ENCODE measurements at regions of chr1 and their contacts with region 1.

Region 1: GRCh38 chr1:227482023-227482299 is 81.4 kb upstream of the ZNF678 start:
- DNase-seq: no peak
- H3K4me3 Mint-ChIP-seq: no peak overlapping the region
- H3K27ac Mint-ChIP-seq: no peak overlapping the region
- H3K4me1 Mint-ChIP-seq: no peaks in the 10 kb centered on the region
- H3K27me3 Mint-ChIP-seq: peaks cover 9% of the 10 kb centered on the region

Region 2: GRCh38 chr1:227459326-227459841 is 22.6 kb before region 1 on chr1:
- CTCF ChIA-PET with region 1: no interaction called
- POLR2A ChIA-PET with region 1: no interaction called
- intact Hi-C with region 1: no loop called
- DNase-seq: no peak
- H3K4me3 Mint-ChIP-seq: no peak overlapping the region
- H3K27ac Mint-ChIP-seq: no peak overlapping the region
- H3K4me1 Mint-ChIP-seq: no peaks in the 10 kb centered on the region
- H3K27me3 Mint-ChIP-seq: peaks cover 8% of the 10 kb centered on the region

Region 3: GRCh38 chr1:227954163-227954850 is 472.3 kb after region 1 on chr1:
- CTCF ChIA-PET with region 1: interaction called, 16 read pairs
- POLR2A ChIA-PET with region 1: no interaction called
- intact Hi-C with region 1: loop called (anchors 2 kb)
- DNase-seq: no peak
- H3K4me3 Mint-ChIP-seq: no peak overlapping the region
- H3K27ac Mint-ChIP-seq: no peak overlapping the region
- H3K4me1 Mint-ChIP-seq: peaks cover 5% of the 10 kb centered on the region
- H3K27me3 Mint-ChIP-seq: peaks cover 22% of the 10 kb centered on the region

Region 4: GRCh38 chr1:228082135-228082891 is 600.4 kb after region 1 on chr1 and contains the start of gene ARF1:
- CTCF ChIA-PET with region 1: no interaction called
- POLR2A ChIA-PET with region 1: no interaction called
- intact Hi-C with region 1: no loop called
- DNase-seq: peak; percentile 93
- H3K4me3 Mint-ChIP-seq: peak within 1 kb of the TSS; percentile 91
- H3K27ac Mint-ChIP-seq: peak within 1 kb of the TSS; percentile 96
- H3K4me1 Mint-ChIP-seq: peaks cover 37% of the 10 kb centered on the region
- H3K27me3 Mint-ChIP-seq: no peaks in the 10 kb centered on the region
- total RNA-seq, gene ARF1: 346 to 355 TPM

Region 5: DNA sequence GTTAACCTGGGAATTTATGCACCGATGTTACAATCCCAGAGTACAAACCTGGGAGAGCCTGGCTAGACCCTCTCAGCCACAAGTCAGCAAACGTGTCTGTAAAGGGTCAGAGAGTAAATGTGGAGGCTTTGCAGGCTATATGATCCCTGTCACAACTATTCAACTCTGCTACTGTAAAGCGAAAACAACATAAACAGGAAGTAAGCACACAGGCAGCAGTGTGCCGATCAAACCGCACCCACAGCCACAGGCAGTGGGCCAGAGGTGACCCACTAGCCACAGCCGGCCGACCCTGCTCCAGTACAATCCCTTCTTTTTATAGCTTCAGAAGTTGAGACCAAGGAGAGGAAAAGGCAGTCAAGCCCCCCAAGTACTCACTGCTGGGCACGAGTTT is 1717.9 kb after region 1 on chr1:
- CTCF ChIA-PET with region 1: no interaction called
- POLR2A ChIA-PET with region 1: no interaction called
- intact Hi-C with region 1: no loop called
- DNase-seq: no peak
- H3K4me3 Mint-ChIP-seq: no peak overlapping the region
- H3K27ac Mint-ChIP-seq: no peak overlapping the region
- H3K4me1 Mint-ChIP-seq: peaks cover 20% of the 10 kb centered on the region
- H3K27me3 Mint-ChIP-seq: no peaks in the 10 kb centered on the region